ENCODE measurements at regions of chr2 and their contacts with region 1.

Region 1: DNA sequence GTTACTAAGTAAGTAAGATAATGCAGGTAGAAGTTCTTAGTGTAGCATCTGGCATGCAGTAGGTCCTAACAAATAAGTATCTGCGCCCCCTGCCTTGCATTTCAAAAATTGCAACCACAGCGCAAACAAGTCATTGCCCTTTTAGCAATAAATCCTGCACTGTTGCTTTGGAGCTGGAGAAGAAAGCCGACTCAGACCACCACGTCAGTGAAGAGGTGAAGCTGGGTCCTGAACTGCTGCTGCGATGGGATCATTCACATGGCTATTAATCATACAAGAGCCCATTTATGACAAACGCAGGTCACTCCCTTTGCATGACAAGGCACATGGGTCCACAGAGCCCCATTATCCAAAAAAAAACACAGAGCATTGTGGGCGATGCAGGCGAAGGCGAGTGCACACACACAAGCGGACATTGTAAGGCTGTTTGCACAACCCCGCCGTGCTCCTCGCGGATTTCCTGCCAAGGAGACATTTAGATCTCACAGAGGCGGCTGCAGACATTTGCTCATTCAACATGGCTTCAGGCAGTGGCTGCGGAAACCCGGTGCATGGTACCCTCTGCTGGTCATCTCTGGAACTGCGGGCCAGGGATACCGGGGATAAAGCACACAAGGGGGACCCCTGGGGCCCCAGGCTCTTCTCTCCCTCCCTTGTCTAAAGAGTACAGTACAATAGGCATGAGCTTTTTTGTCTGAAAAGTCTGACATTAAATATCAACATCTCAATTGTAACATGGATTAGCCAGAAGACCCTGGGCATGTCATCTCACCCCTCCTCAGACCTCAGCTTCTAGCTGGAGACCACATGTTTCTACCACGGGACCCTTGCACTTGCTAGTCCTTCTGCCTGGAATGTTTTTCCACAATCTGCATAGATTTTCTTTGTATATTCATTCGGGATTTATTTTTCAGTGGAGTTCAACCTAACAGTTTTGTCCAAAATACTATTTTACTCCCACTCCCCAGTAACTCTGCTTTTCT is 56.7 kb downstream of the CYRIA start:
- DNase-seq: peak; percentile 61 to 75
- ATAC-seq: peak; percentile 80 to 88
- H3K4me3 ChIP-seq: peak overlapping the region; percentile 34 to 60 (median 46)
- H3K27ac ChIP-seq: peak overlapping the region in 2 of 4 donors; percentile 15 to 46
- H3K4me1 ChIP-seq: peaks cover 8 to 16% of the 10 kb centered on the region in 2 donors
- H3K27me3 ChIP-seq: no peaks in the 10 kb centered on the region
- CTCF ChIP-seq: peak; percentile 87 to 94 (median 93)
- POLR2A ChIP-seq: no peak

Region 2: GRCh38 chr2:16452117-16452516 is 156.8 kb before region 1 on chr2:
- in situ Hi-C with region 1: no loop called
- intact Hi-C with region 1: no loop called
- DNase-seq: no peak
- ATAC-seq: no peak
- H3K4me3 ChIP-seq: no peak overlapping the region
- H3K27ac ChIP-seq: no peak overlapping the region
- H3K4me1 ChIP-seq: no peaks in the 10 kb centered on the region
- H3K27me3 ChIP-seq: no peaks in the 10 kb centered on the region
- CTCF ChIP-seq: no peak
- POLR2A ChIP-seq: no peak

Region 3: GRCh38 chr2:16525265-16525887 is 83.6 kb before region 1 on chr2:
- in situ Hi-C with region 1: no loop called
- intact Hi-C with region 1: loop called (anchors 1 kb)
- DNase-seq: peak in 1 of 2 donors; percentile 18
- ATAC-seq: peak in 1 of 2 donors; percentile 39
- H3K4me3 ChIP-seq: no peak overlapping the region
- H3K27ac ChIP-seq: no peak overlapping the region
- H3K4me1 ChIP-seq: peaks cover 0 to 7% of the 10 kb centered on the region in 2 donors
- H3K27me3 ChIP-seq: no peaks in the 10 kb centered on the region
- CTCF ChIP-seq: peak in 4 of 5 experiments; percentile 39 to 51 (median 46)
- POLR2A ChIP-seq: no peak

Region 4: DNA sequence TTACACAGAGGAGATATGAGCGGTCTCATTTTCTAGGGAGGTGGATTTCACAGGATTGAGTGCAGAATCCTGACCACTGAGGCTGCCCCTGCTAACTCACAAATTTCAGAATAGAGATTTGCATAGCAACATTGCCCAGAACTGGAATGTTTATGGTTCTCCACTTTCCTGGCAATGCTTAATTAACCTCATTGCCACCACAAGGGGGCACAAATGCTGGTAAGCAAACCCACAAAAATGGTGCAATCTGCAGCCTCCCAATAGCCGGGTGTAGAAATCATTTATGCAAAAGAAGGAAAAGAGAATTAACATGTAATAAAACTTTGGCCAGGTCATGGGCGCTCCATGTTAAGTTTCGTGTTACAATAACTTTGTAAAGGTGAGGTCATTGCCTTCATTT is 55.7 kb before region 1 on chr2:
- in situ Hi-C with region 1: loop called (anchors 5 to 10 kb)
- intact Hi-C with region 1: loop called (anchors 1 kb)
- DNase-seq: peak in 1 of 2 donors; percentile 20
- ATAC-seq: peak; percentile 51 to 76
- H3K4me3 ChIP-seq: no peak overlapping the region
- H3K27ac ChIP-seq: no peak overlapping the region
- H3K4me1 ChIP-seq: no peaks in the 10 kb centered on the region
- H3K27me3 ChIP-seq: no peaks in the 10 kb centered on the region
- CTCF ChIP-seq: peak; percentile 46 to 61 (median 61)
- POLR2A ChIP-seq: no peak